ENCODE measurements at regions of chr5 and their contacts with region 1.

Region 1: GRCh38 chr5:138542956-138543729 is at the start of gene ETF1:
- DNase-seq: peak; percentile 99 to 100 (median 99)
- ATAC-seq: peak; percentile 89
- H3K4me3 ChIP-seq: peak within 1 kb of the TSS; percentile 86 to 90
- H3K4me3 Mint-ChIP-seq: peak within 1 kb of the TSS; percentile 100
- H3K27ac ChIP-seq: peak within 1 kb of the TSS; percentile 98 to 100
- H3K27ac Mint-ChIP-seq: peak within 1 kb of the TSS; percentile 100
- H3K4me1 ChIP-seq: peaks cover 52% of the 10 kb centered on the region
- H3K4me1 Mint-ChIP-seq: peaks cover 72% of the 10 kb centered on the region
- H3K27me3 ChIP-seq: no peaks in the 10 kb centered on the region
- H3K27me3 Mint-ChIP-seq: no peaks in the 10 kb centered on the region
- CTCF ChIP-seq: no peak
- total RNA-seq, gene ETF1: 241 to 247 TPM

Region 2: DNA sequence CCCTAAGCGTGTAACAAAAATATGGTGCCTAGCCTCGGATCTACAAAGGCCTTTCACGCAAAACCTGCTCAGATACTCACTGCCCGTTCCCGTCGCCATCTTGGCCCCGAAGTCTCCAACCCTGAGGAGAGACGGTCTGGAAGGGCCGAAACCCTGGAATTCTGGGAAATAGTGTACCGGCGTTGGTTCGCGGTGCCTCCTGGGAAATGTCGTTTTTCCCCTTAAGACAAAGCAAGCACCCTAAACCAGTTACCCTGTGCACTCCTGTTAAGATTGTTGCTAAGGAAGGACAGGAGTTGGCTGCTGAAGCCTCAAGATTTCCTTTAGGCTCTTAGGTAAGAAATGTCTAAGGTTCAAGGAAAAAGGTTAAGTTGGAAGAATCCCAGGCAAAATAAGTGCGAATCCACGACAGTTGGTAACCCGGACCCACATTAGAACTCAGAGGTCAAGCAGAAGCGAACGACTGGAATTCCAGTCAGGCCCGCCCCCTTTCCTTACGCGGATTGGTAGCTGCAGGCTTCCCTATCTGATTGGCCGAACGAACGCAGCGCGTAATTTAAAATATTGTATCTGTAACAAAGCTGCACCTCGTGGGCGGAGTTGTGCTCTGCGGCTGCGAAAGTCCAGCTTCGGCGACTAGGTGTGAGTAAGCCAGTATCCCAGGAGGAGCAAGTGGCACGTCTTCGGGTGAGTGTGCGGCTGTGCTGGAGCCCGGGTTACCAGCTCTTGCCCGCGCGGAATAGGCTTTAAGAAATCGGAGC is 364.4 kb before region 1 on chr5 and contains the starts of genes BRD8 and KIF20A:
- CTCF ChIA-PET with region 1: no interaction called
- POLR2A ChIA-PET with region 1: no interaction called
- intact Hi-C with region 1: loop called in 1 of 2 experiments (anchors 2 kb)
- DNase-seq: peak; percentile 74 to 94 (median 88)
- ATAC-seq: peak; percentile 88
- H3K4me3 ChIP-seq: peak within 1 kb of the TSS; percentile 67 to 92
- H3K4me3 Mint-ChIP-seq: peak within 1 kb of the TSS; percentile 46
- H3K27ac ChIP-seq: peak within 1 kb of the TSS; percentile 42 to 77
- H3K27ac Mint-ChIP-seq: no peak within 1 kb of the TSS
- H3K4me1 ChIP-seq: peaks cover 15% of the 10 kb centered on the region
- H3K4me1 Mint-ChIP-seq: peaks cover 10% of the 10 kb centered on the region
- H3K27me3 ChIP-seq: no peaks in the 10 kb centered on the region
- H3K27me3 Mint-ChIP-seq: no peaks in the 10 kb centered on the region
- CTCF ChIP-seq: no peak
- total RNA-seq, gene BRD8: 13.0 to 15.0 TPM
- total RNA-seq, gene KIF20A: 0.19 TPM in 1 of 2 experiments, not detected in the other

Region 3: DNA sequence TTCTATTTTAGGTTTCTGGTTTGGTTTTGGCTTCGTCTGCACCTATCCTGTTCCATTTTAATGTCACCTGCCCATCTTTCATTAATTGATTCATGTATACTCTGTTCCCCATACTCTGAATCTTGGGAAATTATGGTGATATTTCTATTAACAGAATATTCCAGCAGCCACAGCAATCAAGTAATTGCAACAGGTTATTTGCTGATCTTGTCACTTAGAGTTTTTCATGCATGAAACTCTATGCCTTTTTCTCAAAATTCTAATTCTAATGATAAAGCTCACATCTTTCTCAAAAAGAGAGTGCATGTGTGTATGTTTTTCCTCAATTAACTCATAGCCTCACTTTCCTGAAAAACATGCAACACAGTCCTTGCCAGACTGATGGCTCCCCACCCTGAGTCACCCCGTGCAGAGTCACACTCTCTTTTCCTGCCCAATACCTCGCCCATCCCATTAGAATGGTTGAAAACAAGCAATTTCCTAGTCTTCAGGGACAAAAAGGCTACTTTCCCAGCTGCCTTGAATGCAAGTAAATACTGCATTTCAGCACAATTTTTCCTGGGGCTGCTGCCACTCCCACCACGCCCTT is 284.3 kb before region 1 on chr5:
- CTCF ChIA-PET with region 1: no interaction called
- POLR2A ChIA-PET with region 1: no interaction called
- intact Hi-C with region 1: no loop called
- DNase-seq: no peak
- ATAC-seq: no peak
- H3K4me3 ChIP-seq: no peak overlapping the region
- H3K4me3 Mint-ChIP-seq: no peak overlapping the region
- H3K27ac ChIP-seq: no peak overlapping the region
- H3K27ac Mint-ChIP-seq: no peak overlapping the region
- H3K4me1 ChIP-seq: no peaks in the 10 kb centered on the region
- H3K4me1 Mint-ChIP-seq: no peaks in the 10 kb centered on the region
- H3K27me3 ChIP-seq: no peaks in the 10 kb centered on the region
- H3K27me3 Mint-ChIP-seq: peaks cover 2% of the 10 kb centered on the region
- CTCF ChIP-seq: no peak

Region 4: DNA sequence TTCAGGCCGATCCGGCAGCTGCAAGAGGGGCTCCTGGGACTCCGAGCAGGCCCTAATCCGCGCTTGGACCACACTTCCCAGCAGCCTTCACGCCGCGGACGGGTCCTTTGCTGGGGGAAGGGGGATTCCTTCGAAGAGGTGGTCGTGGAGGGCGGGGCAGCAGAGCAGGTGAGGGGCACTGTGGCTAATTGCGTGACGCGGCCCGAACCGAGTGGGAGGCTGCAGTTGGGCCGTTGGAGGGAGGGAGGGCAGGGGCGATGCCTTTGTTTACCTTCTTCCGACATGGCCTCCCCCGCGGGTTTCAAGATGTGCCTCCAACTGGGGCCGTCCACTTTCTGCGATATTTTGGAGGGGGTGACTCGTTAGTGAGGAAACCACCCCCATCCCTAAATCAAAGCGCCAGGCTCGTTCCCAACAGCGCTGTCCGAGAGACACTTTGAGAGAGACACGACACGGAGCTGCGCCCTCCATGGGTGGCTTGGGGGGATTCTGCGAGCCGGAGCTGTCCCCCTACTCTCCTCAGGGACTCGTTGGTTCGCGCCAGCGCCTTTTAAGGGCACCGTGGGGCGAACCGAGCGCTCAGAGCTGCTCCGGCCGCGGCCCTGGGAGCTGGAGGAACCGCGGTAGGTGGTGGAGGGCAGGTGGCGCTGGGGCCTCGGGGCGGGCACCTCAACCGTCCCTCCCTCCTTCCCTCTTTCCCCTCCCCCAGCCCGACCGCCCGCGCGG is 205.3 kb before region 1 on chr5 and contains the start of gene FAM53C:
- CTCF ChIA-PET with region 1: no interaction called
- POLR2A ChIA-PET with region 1: interaction called, 14 read pairs
- intact Hi-C with region 1: loop called (anchors 1 to 5 kb)
- DNase-seq: peak; percentile 88 to 98 (median 91)
- ATAC-seq: peak; percentile 84
- H3K4me3 ChIP-seq: peak within 1 kb of the TSS; percentile 69 to 85
- H3K4me3 Mint-ChIP-seq: peak within 1 kb of the TSS; percentile 93
- H3K27ac ChIP-seq: peak within 1 kb of the TSS; percentile 95 to 99
- H3K27ac Mint-ChIP-seq: peak within 1 kb of the TSS; percentile 100
- H3K4me1 ChIP-seq: peaks cover 23% of the 10 kb centered on the region
- H3K4me1 Mint-ChIP-seq: peaks cover 41% of the 10 kb centered on the region
- H3K27me3 ChIP-seq: no peaks in the 10 kb centered on the region
- H3K27me3 Mint-ChIP-seq: no peaks in the 10 kb centered on the region
- CTCF ChIP-seq: no peak
- total RNA-seq, gene FAM53C: 99.8 to 99.9 TPM

Region 5: DNA sequence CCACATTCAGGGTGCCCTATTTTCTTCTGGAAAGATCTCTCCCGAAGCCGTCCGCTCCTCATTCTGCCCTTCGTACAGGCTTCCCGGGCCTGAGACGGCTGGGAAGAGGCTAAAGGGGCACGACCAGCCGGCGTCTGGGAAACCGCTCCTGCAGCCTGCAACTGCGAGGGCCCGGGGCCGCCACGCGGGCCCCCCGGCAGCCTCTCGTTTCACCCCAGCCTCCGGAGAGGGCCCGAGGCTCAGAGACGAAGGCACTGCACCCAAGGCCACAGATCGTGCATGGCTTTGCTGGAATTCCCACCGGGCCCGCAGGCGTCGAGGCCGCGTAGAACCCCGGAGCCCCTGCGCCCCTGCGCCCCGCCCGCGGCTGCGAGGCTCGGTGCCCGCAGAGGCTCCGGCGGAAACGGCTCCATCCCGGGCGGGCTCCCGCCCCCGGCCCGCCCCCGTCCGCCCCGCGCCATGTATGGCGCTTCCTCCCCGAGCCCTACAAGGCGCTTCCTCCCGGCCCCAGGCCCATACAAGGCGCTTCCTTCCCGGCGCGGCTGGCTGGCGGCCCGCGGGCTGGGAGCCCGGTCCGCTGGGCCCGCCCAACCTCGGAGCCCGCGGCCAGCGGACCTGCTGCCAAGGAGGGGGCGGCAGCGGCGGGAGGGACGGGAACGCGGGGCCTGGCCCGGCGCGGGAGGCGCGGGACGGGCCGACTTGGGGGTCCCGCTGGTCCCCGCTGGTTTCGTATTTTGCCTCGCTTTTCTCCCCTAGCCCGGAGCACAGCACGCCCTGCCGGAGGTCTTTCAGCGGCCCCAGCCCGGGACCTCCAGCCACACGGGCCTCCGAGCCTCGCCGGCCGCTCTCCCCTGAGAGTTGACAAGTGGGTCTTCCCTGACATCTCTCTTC is 51.2 kb before region 1 on chr5:
- CTCF ChIA-PET with region 1: no interaction called
- POLR2A ChIA-PET with region 1: interaction called, 3 read pairs
- intact Hi-C with region 1: loop called in 1 of 2 experiments (anchors 1 kb)
- DNase-seq: peak; percentile 72 to 94 (median 84)
- ATAC-seq: peak; percentile 98
- H3K4me3 ChIP-seq: peak overlapping the region; percentile 42 to 63
- H3K4me3 Mint-ChIP-seq: peak overlapping the region; percentile 93
- H3K27ac ChIP-seq: no peak overlapping the region
- H3K27ac Mint-ChIP-seq: no peak overlapping the region
- H3K4me1 ChIP-seq: peaks cover 19% of the 10 kb centered on the region
- H3K4me1 Mint-ChIP-seq: peaks cover 16% of the 10 kb centered on the region
- H3K27me3 ChIP-seq: peaks cover 0 to 15% of the 10 kb centered on the region in 2 experiments
- H3K27me3 Mint-ChIP-seq: peaks cover 18% of the 10 kb centered on the region
- CTCF ChIP-seq: no peak

Region 6: GRCh38 chr5:139293504-139294373 is 750.6 kb after region 1 on chr5 and contains the start of gene MATR3:
- CTCF ChIA-PET with region 1: no interaction called
- POLR2A ChIA-PET with region 1: interaction called, 7 read pairs
- intact Hi-C with region 1: loop called in 1 of 2 experiments (anchors 1 kb)
- DNase-seq: peak; percentile 88 to 95 (median 93)
- ATAC-seq: peak; percentile 90
- H3K4me3 ChIP-seq: peak within 1 kb of the TSS; percentile 72 to 94
- H3K4me3 Mint-ChIP-seq: peak within 1 kb of the TSS; percentile 98
- H3K27ac ChIP-seq: peak within 1 kb of the TSS; percentile 98
- H3K27ac Mint-ChIP-seq: peak within 1 kb of the TSS; percentile 98
- H3K4me1 ChIP-seq: peaks cover 34% of the 10 kb centered on the region
- H3K4me1 Mint-ChIP-seq: peaks cover 41% of the 10 kb centered on the region
- H3K27me3 ChIP-seq: no peaks in the 10 kb centered on the region
- H3K27me3 Mint-ChIP-seq: no peaks in the 10 kb centered on the region
- CTCF ChIP-seq: no peak
- total RNA-seq, gene MATR3: 420 to 430 TPM

Region 7: GRCh38 chr5:139482050-139482889 is 939.1 kb after region 1 on chr5 and contains the start of gene STING1:
- CTCF ChIA-PET with region 1: no interaction called
- POLR2A ChIA-PET with region 1: no interaction called
- intact Hi-C with region 1: loop called in 1 of 2 experiments (anchors 2 kb)
- DNase-seq: peak; percentile 22 to 89 (median 73)
- ATAC-seq: peak; percentile 78
- H3K4me3 ChIP-seq: peak within 1 kb of the TSS; percentile 56 to 61
- H3K4me3 Mint-ChIP-seq: peak within 1 kb of the TSS; percentile 90
- H3K27ac ChIP-seq: peak within 1 kb of the TSS; percentile 58 to 84
- H3K27ac Mint-ChIP-seq: peak within 1 kb of the TSS; percentile 97
- H3K4me1 ChIP-seq: peaks cover 26% of the 10 kb centered on the region
- H3K4me1 Mint-ChIP-seq: peaks cover 34% of the 10 kb centered on the region
- H3K27me3 ChIP-seq: no peaks in the 10 kb centered on the region
- H3K27me3 Mint-ChIP-seq: no peaks in the 10 kb centered on the region
- CTCF ChIP-seq: no peak
- total RNA-seq, gene STING1: 55.0 to 57.8 TPM